Mammary epithelial cell (primary cell): ENCODE measurements at regions of chr16 and their contacts with region 1.

Region 1: GRCh38 chr16:24681809-24682511 is 47.5 kb upstream of the TNRC6A start:
- DNase-seq: peak; percentile 83
- H3K4me3 ChIP-seq: no peak overlapping the region
- H3K27ac ChIP-seq: peak overlapping the region; percentile 98
- H3K4me1 ChIP-seq: peaks cover 26% of the 10 kb centered on the region
- H3K27me3 ChIP-seq: no peaks in the 10 kb centered on the region
- CTCF ChIP-seq: no peak

Region 2: DNA sequence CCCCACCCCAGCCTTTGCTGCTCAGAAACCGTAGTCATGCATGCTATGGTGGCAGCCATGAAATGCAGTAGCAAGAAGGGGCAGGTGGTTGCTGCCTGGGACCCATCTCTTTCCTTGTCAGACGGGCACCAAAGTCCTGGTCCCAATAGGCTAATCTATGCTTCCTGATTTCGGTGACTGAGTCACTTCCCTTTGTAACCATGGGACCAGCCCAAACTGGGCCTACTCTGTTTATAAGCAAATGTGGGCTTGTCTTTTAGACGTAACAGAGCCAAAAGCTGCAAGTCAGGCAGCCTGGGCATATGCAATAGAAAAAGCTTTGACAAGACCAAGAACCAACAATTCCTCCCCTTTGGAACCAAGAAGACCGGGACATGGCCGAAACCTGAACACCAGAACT is 241.7 kb before region 1 on chr16:
- CTCF ChIA-PET with region 1: no interaction called
- dilution Hi-C with region 1: no loop called
- in situ Hi-C with region 1: no loop called
- intact Hi-C with region 1: no loop called
- DNase-seq: no peak
- H3K4me3 ChIP-seq: no peak overlapping the region
- H3K27ac ChIP-seq: no peak overlapping the region
- H3K4me1 ChIP-seq: no peaks in the 10 kb centered on the region
- H3K27me3 ChIP-seq: no peaks in the 10 kb centered on the region
- CTCF ChIP-seq: no peak

Region 3: GRCh38 chr16:24635900-24636610 is 45.9 kb before region 1 on chr16:
- CTCF ChIA-PET with region 1: no interaction called
- dilution Hi-C with region 1: loop called (anchors 5 kb)
- in situ Hi-C with region 1: no loop called
- intact Hi-C with region 1: no loop called
- DNase-seq: peak; percentile 79
- H3K4me3 ChIP-seq: no peak overlapping the region
- H3K27ac ChIP-seq: no peak overlapping the region
- H3K4me1 ChIP-seq: peaks cover 18% of the 10 kb centered on the region
- H3K27me3 ChIP-seq: no peaks in the 10 kb centered on the region
- CTCF ChIP-seq: no peak

Region 4: DNA sequence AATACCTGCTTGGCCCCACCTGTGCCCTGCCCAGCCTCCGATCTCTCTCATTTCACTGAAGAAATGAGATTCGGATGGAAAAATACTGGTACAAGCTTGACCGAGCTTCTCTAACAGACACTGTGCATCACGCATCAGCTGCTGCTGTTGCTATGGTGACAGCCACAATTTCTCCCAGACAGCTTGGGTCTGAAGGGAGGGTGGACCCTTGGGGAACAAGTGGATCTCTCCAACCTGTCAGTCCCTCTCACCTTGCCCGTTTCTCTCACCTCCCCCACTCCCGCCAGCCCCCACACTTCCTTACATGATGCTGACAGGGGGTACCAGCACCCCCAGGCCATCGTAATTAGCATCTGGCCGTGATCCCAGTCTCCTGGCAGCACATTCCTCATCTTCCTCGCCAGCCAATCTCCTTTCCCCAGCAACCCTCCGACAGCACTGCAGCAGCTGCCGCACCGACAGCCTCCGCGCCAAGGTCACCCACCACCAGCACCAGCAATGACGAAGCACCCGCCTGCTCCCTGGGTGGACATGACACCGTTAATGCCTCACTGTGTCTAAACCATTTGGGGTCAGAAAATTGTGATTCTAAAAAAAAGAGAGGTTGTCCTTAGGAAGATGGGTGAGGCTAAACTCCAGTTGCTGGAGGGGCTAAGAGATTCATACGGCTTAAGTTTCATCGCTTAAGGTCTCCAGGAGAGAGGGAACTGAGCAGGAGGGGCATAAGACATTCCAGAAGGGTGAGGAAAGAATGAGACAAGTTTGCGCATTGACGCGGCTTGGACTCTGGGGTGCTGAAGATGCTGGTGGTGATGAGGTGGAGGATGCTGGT is 11.1 kb before region 1 on chr16:
- CTCF ChIA-PET with region 1: no interaction called
- dilution Hi-C with region 1: no loop called
- in situ Hi-C with region 1: no loop called
- intact Hi-C with region 1: loop called (anchors 1 kb)
- DNase-seq: peak; percentile 55
- H3K4me3 ChIP-seq: no peak overlapping the region
- H3K27ac ChIP-seq: no peak overlapping the region
- H3K4me1 ChIP-seq: peaks cover 18% of the 10 kb centered on the region
- H3K27me3 ChIP-seq: no peaks in the 10 kb centered on the region
- CTCF ChIP-seq: no peak

Region 5: GRCh38 chr16:24729362-24729984 is 47.5 kb after region 1 on chr16 and contains the start of gene TNRC6A:
- CTCF ChIA-PET with region 1: no interaction called
- dilution Hi-C with region 1: no loop called
- in situ Hi-C with region 1: no loop called
- intact Hi-C with region 1: loop called (anchors 5 kb)
- DNase-seq: peak; percentile 83
- H3K4me3 ChIP-seq: peak within 1 kb of the TSS; percentile 85 to 96 (median 89)
- H3K27ac ChIP-seq: peak within 1 kb of the TSS; percentile 81
- H3K4me1 ChIP-seq: peaks cover 17% of the 10 kb centered on the region
- H3K27me3 ChIP-seq: no peaks in the 10 kb centered on the region
- CTCF ChIP-seq: no peak
- total RNA-seq, gene TNRC6A: 21.3 to 36.9 TPM

Region 6: DNA sequence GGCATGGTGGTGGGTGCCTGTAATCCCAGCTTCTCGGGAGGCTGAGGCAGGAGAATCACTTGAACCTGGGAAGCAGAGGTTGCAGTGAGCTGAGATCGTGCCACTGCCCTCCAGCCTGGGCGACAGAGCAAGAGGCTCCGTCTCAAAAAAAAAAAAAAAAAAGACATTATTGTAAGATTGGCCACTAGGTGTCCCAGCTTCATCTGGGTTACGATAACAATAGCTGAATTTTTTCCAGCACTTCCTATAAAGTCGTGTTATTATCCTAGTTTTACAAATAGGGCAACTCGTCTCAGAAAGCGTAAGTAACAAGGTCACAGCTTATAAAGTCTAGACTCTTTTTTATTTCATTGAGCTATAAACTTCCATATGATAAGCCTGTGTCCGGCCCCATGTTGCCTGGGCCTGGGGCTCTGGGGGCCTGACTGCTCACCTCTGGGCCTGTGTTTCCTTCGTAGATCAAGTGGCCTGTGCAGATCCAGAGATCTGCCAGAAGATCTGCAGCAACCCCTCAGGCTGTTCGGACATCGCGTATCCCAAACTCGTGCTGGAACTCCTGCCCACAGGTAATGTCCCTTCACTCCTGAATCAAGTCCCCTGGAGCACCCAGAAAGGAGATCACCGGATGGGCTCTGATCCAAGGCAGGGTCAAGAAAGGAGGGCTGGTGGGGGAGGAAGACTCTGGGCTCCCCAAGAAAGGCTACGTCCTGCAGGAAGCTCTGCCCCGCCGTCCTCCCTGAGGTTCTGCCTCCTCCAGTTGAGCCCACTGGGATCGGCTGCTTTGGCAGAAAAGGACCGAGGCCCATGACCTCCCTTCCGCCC is 224.4 kb after region 1 on chr16:
- CTCF ChIA-PET with region 1: interaction called, 16 read pairs
- dilution Hi-C with region 1: no loop called
- in situ Hi-C with region 1: no loop called
- intact Hi-C with region 1: no loop called
- DNase-seq: no peak
- H3K4me3 ChIP-seq: no peak overlapping the region
- H3K27ac ChIP-seq: no peak overlapping the region
- H3K4me1 ChIP-seq: no peaks in the 10 kb centered on the region
- H3K27me3 ChIP-seq: peaks cover 2% of the 10 kb centered on the region
- CTCF ChIP-seq: peak; percentile 28 to 50